Gastrocnemius medialis (tissue), 4 donors: ENCODE measurements at regions of chr18 and their contacts with region 1.

Region 1: DNA sequence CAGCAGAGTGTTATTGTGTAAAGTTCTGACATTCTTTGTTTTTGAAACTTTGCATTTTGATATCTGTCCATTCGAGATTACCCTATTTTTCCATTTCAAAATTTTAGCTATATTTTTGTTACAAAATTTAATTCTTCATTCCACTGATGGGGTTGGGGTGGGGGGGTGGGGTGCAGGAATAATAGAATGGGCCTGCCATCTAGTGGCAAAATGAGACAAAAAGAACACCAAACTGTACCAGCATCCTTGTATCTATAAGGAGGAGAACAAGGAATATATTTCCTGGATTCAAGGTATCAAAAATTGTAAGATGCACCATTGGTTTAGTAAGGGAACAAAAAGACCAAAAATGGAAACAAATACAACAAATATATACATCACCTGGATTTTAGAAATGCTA is 27.9 kb upstream of the TTR start:
- DNase-seq: no peak
- ATAC-seq: no peak
- H3K4me3 ChIP-seq: no peak overlapping the region
- H3K27ac ChIP-seq: no peak overlapping the region
- H3K4me1 ChIP-seq: no peaks in the 10 kb centered on the region
- H3K27me3 ChIP-seq: no peaks in the 10 kb centered on the region
- CTCF ChIP-seq: no peak
- POLR2A ChIP-seq: no peak

Region 2: DNA sequence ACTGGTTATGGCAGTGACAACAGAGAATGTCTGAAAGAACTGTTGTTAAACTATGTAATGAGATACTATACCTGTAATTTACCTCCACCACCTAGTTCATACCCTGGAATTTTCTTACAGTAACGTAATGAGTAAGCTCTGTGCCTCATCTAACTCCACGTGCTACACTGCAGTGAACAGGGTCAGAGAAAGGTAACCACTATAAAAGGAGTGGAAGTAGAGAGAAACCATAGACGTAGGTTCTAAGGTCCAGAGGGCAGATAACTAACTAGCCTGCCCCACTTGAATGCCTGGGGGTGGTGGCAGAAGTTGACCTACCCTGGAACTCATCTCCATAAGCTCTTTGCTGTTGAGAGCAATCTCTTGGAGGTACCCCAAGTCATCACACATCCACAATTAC is 152.6 kb after region 1 on chr18:
- in situ Hi-C with region 1: loop called in 2 of 4 experiments (anchors 5 to 10 kb)
- intact Hi-C with region 1: no loop called
- DNase-seq: no peak
- ATAC-seq: no peak
- H3K4me3 ChIP-seq: no peak overlapping the region
- H3K27ac ChIP-seq: no peak overlapping the region
- H3K4me1 ChIP-seq: no peaks in the 10 kb centered on the region
- H3K27me3 ChIP-seq: no peaks in the 10 kb centered on the region
- CTCF ChIP-seq: no peak
- POLR2A ChIP-seq: no peak